Naive thymus-derived CD4-positive, alpha-beta T cell (primary cell): ENCODE measurements at regions of chr3 and their contacts with region 1.

Region 1: DNA sequence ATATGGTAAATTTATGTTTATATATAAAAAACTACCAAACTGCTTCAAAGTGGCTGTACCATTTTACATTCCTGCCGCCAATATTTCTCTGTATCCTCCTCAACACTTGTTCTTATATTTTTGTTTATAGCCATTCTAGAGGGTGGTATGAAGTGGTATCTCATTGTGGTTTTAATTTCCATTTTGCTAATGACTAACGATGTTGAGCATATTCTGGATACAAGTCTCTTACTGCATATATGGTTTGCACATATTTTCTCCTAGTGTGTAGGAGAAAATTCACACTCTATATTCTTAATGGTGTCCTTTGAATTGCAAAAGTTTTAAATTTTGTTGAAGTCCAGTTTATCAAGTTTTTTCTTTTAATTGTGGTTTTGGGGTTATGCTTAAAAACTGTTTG is 15.1 kb downstream of the NMD3 start:
- DNase-seq: no peak
- ATAC-seq: no peak
- H3K4me3 ChIP-seq: no peak overlapping the region
- H3K4me3 Mint-ChIP-seq: no peak overlapping the region
- H3K27ac ChIP-seq: no peak overlapping the region
- H3K27ac Mint-ChIP-seq: no peak overlapping the region
- H3K4me1 ChIP-seq: no peaks in the 10 kb centered on the region
- H3K4me1 Mint-ChIP-seq: peaks cover 4 to 33% (median 9%) of the 10 kb centered on the region in 7 donors
- H3K27me3 ChIP-seq: no peaks in the 10 kb centered on the region
- H3K27me3 Mint-ChIP-seq: no peaks in the 10 kb centered on the region

Region 2: DNA sequence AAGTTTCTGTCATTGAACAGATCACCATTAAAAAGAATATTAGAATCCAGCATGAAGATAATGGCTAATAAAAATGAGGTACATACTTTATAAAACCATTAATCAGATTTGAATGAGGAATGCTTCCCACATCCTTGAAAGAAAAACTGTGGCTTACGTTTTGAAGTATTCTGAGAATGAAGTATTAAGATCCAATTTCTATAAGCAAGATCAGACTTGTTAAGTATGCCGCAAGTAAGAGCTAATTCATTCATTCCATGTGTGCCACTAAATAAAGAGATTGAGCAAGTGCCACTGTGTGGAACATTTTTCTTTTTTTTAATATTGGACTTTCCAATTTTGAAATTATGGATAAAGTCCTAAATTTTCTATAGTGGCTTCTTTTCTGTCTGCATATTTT is 15.5 kb after region 1 on chr3:
- CTCF ChIA-PET with region 1: no interaction called
- POLR2A ChIA-PET with region 1: no interaction called
- intact Hi-C with region 1: loop called in 1 of 2 experiments (anchors 2 kb)
- DNase-seq: no peak
- ATAC-seq: no peak
- H3K4me3 ChIP-seq: no peak overlapping the region
- H3K4me3 Mint-ChIP-seq: no peak overlapping the region
- H3K27ac ChIP-seq: no peak overlapping the region
- H3K27ac Mint-ChIP-seq: no peak overlapping the region
- H3K4me1 ChIP-seq: no peaks in the 10 kb centered on the region
- H3K4me1 Mint-ChIP-seq: peaks cover 0 to 19% (median 2%) of the 10 kb centered on the region in 7 donors
- H3K27me3 ChIP-seq: no peaks in the 10 kb centered on the region
- H3K27me3 Mint-ChIP-seq: no peaks in the 10 kb centered on the region

Region 3: DNA sequence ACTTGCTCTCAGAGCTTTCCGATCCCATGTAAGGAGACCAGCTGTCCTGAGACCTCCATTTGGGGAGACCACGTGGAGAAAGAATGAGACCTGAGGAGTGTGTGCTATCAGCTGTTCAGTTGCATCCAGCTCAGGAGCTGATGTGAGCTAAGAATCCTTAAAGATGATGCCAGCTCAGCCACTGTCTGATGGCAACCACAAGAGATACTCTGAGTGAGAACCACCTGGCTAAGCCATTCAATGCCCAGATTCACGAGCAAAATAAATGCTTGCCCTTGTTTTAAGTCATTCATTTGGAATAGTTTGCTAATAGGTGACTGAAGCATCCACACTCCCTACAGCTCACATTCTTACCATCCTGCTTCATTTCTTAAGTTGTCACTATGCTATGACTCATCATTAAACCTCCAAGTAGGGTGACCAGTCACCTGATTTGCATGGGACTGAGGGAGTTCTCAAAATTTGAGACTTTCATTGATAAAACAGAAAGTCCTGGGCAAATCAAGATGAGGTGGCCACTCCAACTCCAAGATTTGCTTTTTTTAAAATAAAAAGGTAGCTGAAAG is 78.7 kb after region 1 on chr3:
- CTCF ChIA-PET with region 1: no interaction called
- POLR2A ChIA-PET with region 1: no interaction called
- intact Hi-C with region 1: no loop called
- DNase-seq: no peak
- ATAC-seq: no peak
- H3K4me3 ChIP-seq: no peak overlapping the region
- H3K4me3 Mint-ChIP-seq: no peak overlapping the region
- H3K27ac ChIP-seq: no peak overlapping the region
- H3K27ac Mint-ChIP-seq: peak overlapping the region in 1 of 9 donors; percentile 32
- H3K4me1 ChIP-seq: peaks cover 34 to 40% of the 10 kb centered on the region in 2 donors
- H3K4me1 Mint-ChIP-seq: peaks cover 25 to 71% (median 50%) of the 10 kb centered on the region in 7 donors
- H3K27me3 ChIP-seq: no peaks in the 10 kb centered on the region
- H3K27me3 Mint-ChIP-seq: peaks cover 0 to 70% (median 0%) of the 10 kb centered on the region in 5 donors

Region 4: DNA sequence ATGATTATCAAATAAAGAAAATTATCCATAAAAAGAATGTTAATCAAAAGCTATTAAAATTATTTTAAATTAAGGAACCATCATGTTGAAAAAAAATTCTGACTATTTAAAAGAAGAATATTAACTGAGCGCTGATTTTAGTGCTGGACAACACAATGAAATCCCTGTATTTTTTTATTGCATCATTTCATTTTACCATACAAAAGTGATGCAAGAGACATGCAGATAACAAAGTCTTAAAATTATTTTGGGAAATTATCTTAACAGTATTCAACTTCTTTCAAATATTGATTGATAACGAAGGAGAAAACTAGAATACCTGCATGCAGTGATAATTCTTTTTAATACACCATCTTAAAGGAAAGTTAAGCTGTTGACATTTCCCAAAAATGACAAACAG is 1975.4 kb after region 1 on chr3:
- CTCF ChIA-PET with region 1: no interaction called
- POLR2A ChIA-PET with region 1: no interaction called
- intact Hi-C with region 1: no loop called
- DNase-seq: no peak
- ATAC-seq: no peak
- H3K4me3 ChIP-seq: no peak overlapping the region
- H3K4me3 Mint-ChIP-seq: no peak overlapping the region
- H3K27ac ChIP-seq: no peak overlapping the region
- H3K27ac Mint-ChIP-seq: no peak overlapping the region
- H3K4me1 ChIP-seq: no peaks in the 10 kb centered on the region
- H3K4me1 Mint-ChIP-seq: no peaks in the 10 kb centered on the region
- H3K27me3 ChIP-seq: no peaks in the 10 kb centered on the region
- H3K27me3 Mint-ChIP-seq: no peaks in the 10 kb centered on the region